Heart left ventricle (tissue), 16 donors: ENCODE measurements at regions of chr12 and their contacts with region 1.

Region 1: GRCh38 chr12:27424631-27425230 is 21.8 kb upstream of the SMCO2 start:
- DNase-seq: peak in 3 of 5 donors; percentile 26 to 28 (median 26)
- ATAC-seq: peak; percentile 68 to 88 (median 83)
- H3K4me3 ChIP-seq: no peak overlapping the region
- H3K27ac ChIP-seq: peak overlapping the region in 5 of 12 donors; percentile 1 to 34 (median 26)
- H3K4me1 ChIP-seq: peaks cover 0 to 14% (median 0%) of the 10 kb centered on the region in 12 donors
- H3K27me3 ChIP-seq: no peaks in the 10 kb centered on the region
- CTCF ChIP-seq: peak; percentile 40 to 78 (median 62)
- POLR2A ChIP-seq: no peak

Region 2: GRCh38 chr12:27511031-27511722 is 86.4 kb after region 1 on chr12:
- intact Hi-C with region 1: loop called in 1 of 10 experiments (anchors 5 kb)
- DNase-seq: no peak
- ATAC-seq: peak; percentile 24 to 70 (median 54)
- H3K4me3 ChIP-seq: no peak overlapping the region
- H3K27ac ChIP-seq: peak overlapping the region; percentile 49 to 85 (median 74)
- H3K4me1 ChIP-seq: peaks cover 0 to 30% (median 9%) of the 10 kb centered on the region in 12 donors
- H3K27me3 ChIP-seq: no peaks in the 10 kb centered on the region
- CTCF ChIP-seq: no peak
- POLR2A ChIP-seq: no peak

Region 3: DNA sequence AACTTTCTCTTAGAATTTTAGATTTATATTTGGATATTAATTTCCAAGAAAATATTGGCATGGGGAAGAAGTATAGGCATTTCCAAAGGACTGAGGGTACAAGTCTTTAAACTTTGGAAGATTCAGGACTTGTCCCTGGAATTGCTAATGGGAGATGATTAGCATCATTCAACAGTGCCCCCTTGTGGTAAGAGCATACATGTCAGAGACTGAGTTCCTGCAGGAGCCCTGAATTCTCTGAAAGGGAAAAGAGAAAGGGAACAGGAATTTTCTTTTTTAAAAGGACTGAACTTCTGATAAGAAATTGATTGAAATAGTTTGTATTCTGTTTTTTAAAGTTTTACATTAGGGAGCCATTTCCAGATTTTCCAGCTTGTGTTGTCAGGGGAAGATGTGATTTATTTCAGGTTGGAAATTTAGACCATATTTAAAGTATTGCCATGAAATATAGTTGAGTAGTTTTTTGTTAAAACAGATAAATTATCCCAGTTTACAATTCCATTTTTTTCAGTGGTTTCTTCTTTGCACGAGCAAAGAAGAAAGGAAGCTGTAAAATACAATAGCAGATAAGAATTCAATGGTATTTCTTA is 227.5 kb after region 1 on chr12:
- intact Hi-C with region 1: loop called in 5 of 10 experiments (anchors 5 kb)
- DNase-seq: peak in 2 of 5 donors; percentile 56 to 73
- ATAC-seq: peak; percentile 67 to 87 (median 78)
- H3K4me3 ChIP-seq: no peak overlapping the region
- H3K27ac ChIP-seq: no peak overlapping the region
- H3K4me1 ChIP-seq: peaks cover 0 to 10% (median 2%) of the 10 kb centered on the region in 12 donors
- H3K27me3 ChIP-seq: no peaks in the 10 kb centered on the region
- CTCF ChIP-seq: peak; percentile 79 to 95 (median 90)
- POLR2A ChIP-seq: no peak